WTC11 (cell line): ENCODE measurements at regions of chr2 and their contacts with region 1.

Region 1: DNA sequence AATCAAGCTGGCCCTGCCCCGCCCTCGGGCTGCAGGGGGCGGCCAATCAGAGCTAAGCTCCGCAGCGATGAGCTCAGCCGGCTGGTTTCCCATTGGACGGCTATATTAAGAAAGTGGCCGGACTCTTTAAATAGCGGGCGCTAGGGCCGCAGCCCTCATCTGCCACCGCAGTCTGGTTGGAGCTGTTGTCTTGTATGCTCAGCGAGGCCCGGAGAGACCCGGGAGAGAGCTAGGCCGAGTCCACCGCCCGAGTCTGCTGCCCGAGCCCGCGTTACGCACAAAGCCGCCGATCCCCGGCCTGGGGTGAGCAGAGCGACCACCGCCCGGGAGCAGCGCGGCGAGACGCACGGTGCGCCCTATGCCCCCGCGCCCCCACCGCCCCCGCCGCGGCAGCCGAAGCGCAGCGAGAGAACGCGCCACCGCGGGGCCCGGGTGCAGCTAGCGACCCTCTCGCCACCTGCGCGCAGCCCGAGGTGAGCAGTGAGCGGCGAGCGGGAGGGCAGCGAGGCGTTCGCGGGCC is at the start of gene RHOB:
- DNase-seq: peak; percentile 95
- ATAC-seq: peak; percentile 81
- H3K4me3 Mint-ChIP-seq: peak within 1 kb of the TSS; percentile 82
- H3K27ac Mint-ChIP-seq: no peak within 1 kb of the TSS
- H3K4me1 Mint-ChIP-seq: peaks cover 35% of the 10 kb centered on the region
- H3K27me3 Mint-ChIP-seq: peaks cover 60% of the 10 kb centered on the region
- CTCF ChIP-seq: no peak
- total RNA-seq, gene RHOB: 20.4 to 23.2 TPM (median 22.7 TPM) in 3 replicates

Region 2: DNA sequence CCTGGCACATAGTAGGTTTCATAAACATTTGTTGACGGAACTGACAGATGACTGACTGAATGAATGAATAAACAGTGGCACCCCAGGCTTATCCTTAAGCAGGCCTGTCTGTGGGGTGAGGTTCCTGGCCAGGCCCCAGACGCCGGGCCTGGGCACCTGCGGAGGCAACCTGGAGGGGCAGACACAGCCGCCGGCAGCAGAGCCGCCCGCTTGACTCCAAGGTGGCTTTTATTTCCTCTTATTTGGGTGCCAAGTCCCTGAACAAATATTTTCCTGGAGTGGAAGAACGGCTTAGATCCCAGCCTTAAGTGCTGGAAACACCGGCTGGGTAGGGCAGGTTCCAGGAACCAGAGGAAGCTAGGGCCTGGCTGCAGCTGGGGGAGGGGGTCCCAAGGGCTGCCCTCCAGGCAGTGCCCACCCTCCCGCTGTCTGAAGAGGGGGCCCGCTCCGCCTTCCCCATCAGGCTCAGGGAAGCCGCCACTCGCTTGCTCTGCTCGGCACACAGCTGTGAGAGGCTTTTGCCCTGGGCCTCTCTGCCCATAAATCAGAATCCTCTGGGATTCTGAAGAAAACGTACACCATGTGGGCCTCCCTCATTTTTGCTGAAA is 250.3 kb before region 1 on chr2:
- CTCF ChIA-PET with region 1: no interaction called
- POLR2A ChIA-PET with region 1: no interaction called
- DNase-seq: no peak
- ATAC-seq: no peak
- H3K4me3 Mint-ChIP-seq: no peak overlapping the region
- H3K27ac Mint-ChIP-seq: no peak overlapping the region
- H3K4me1 Mint-ChIP-seq: peaks cover 4% of the 10 kb centered on the region
- H3K27me3 Mint-ChIP-seq: no peaks in the 10 kb centered on the region
- CTCF ChIP-seq: no peak

Region 3: DNA sequence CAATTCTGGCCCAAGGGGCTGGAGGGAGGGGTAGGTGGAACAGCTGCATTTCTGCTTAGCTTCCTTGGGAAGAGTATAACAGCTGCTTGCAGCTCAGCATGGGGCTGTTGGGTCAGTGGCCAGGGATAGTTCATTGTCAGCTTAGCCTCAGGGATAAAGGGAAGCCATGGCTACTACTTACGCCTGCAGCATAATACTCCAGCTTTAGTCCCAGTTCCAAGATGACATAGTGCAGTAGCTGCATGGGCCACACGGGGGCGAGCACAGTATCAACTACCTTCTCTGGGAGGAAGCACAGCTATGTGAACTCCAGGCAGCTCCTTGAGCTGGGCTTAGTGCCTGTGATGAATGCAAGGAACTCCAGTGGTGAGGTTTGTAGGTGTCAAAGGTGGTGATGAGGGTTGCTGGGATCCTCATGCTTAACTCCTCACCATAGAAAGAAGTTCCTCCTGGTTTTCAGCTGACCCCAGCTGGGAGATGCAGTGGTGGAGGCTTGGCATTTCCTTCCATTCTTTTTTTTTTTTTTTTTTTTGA is 35.5 kb before region 1 on chr2:
- CTCF ChIA-PET with region 1: interaction called, 25 read pairs
- POLR2A ChIA-PET with region 1: interaction called, 10 read pairs
- DNase-seq: peak; percentile 89
- ATAC-seq: peak; percentile 100
- H3K4me3 Mint-ChIP-seq: no peak overlapping the region
- H3K27ac Mint-ChIP-seq: no peak overlapping the region
- H3K4me1 Mint-ChIP-seq: no peaks in the 10 kb centered on the region
- H3K27me3 Mint-ChIP-seq: peaks cover 6% of the 10 kb centered on the region
- CTCF ChIP-seq: peak; percentile 78

Region 4: DNA sequence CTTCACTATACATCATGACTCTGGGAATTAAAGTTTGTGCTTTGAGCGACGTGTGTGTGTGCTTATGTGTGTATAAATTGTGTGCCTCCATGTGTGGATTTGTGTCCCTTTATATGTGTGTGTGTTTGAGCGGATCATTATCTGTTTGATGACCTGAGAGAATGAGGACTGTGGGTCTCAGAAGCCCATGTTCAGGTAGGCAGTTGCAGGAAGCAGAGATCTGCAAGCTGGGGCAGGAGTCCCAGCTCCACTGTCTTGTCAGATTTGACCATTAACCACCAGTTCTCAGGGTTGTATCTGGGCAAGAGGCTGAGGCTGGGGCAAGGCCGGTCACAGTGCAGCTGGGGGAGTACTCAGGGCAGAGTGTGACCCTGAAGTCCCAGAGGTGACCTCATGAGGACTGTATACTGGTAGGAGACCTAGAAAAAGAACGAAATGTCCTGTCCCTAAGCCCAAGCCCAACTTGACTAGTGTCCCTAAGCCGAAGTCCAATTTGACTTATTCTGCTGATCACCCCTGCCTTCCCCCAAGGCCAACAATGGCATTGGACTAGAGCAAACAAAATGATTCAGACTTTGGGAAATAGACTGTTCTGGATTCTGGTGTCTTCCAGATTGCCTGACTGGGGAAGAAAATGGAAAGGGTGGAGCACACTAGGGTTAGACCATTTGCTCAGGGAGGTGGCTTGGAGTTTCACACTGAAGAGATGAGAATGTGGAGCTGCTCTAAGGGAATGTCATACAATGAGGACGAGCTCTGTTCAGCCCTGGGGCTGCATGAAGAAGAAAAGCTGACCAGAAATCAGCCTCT is 28.0 kb after region 1 on chr2:
- CTCF ChIA-PET with region 1: no interaction called
- POLR2A ChIA-PET with region 1: interaction called, 10 read pairs
- DNase-seq: no peak
- ATAC-seq: no peak
- H3K4me3 Mint-ChIP-seq: no peak overlapping the region
- H3K27ac Mint-ChIP-seq: no peak overlapping the region
- H3K4me1 Mint-ChIP-seq: peaks cover 5% of the 10 kb centered on the region; the same call in 1 of the 2 replicates
- H3K27me3 Mint-ChIP-seq: no peaks in the 10 kb centered on the region; the same call in 1 of the 2 replicates
- CTCF ChIP-seq: no peak

Region 5: DNA sequence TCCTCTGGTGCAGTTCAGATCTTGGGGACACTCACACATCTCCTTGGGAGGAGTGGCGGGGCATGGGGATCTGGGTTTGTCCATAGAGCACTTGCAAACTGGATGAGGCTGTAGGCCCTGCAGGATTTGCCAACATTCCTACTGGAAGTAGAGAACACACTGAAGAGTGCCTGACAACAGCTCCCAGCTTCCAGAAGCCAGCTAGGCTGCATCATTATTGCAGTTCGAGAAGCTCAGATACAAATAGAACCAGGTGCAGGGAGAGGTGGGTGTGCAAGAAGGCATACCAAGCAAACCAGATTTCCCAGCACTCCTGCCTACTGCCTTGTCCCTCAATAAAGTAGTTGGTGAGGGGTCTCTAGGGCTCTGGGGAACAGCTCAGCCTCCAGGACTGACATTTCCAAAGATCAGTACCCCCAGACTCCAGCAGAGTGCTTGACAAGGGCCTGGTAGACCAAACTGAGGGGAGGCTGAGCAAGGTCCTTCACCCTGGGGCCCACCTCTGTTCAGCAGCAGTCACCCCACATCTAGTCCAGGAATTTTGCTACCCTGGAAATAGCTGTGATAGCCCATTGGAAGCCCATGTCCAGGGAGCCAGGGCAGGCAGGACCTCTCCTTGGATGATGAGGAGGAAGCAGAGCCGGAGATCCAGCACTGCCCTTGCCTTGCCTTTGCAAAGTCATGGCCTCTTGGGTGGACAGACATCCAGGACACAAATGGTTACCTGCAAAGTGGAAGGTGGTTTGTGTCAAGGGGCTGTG is 52.6 kb after region 1 on chr2:
- CTCF ChIA-PET with region 1: no interaction called
- POLR2A ChIA-PET with region 1: no interaction called
- DNase-seq: no peak
- ATAC-seq: no peak
- H3K4me3 Mint-ChIP-seq: no peak overlapping the region
- H3K27ac Mint-ChIP-seq: no peak overlapping the region
- H3K4me1 Mint-ChIP-seq: no peaks in the 10 kb centered on the region
- H3K27me3 Mint-ChIP-seq: no peaks in the 10 kb centered on the region
- CTCF ChIP-seq: no peak

Region 6: DNA sequence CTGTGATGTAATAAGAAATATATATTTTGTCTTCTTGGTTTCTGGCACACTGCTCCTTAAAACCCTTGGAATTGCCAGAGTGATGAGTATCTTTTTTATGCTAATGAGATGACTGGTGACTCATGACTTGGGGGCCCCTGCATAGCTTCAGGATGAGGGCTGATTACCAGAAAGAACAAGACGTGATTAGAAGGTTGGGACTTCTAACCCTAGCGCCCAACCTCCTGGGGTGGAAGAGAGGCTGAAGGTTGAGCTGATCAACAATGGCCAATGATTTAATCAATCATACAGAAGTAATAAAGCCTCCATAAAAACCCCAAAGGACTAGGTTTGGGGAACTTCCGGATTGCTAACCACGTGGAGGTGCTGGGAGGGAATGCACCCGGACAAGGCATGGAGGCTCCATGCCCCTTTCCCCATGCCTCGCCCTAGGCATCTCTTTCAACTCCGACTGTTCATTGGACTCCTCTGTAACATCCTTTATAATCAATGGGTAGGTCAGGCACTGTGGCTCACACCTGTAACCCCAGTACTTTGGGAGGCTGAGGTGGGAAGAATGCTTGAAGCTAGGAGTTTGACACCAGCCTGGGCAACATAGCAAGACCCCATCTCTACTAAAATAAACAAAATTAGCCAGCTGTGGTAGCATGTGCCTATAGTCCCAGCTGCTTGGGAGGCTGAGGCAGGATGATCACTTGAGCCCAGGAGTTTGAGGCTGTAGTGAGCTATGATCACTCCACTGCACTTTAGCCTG is 114.9 kb after region 1 on chr2:
- CTCF ChIA-PET with region 1: interaction called, 8 read pairs
- POLR2A ChIA-PET with region 1: interaction called, 15 read pairs
- DNase-seq: no peak
- ATAC-seq: no peak
- H3K4me3 Mint-ChIP-seq: no peak overlapping the region; the same call in 1 of the 2 replicates
- H3K27ac Mint-ChIP-seq: no peak overlapping the region
- H3K4me1 Mint-ChIP-seq: peaks cover 42% of the 10 kb centered on the region
- H3K27me3 Mint-ChIP-seq: peaks cover under 1% of the 10 kb centered on the region; the same call in 1 of the 2 replicates
- CTCF ChIP-seq: no peak

Region 7: DNA sequence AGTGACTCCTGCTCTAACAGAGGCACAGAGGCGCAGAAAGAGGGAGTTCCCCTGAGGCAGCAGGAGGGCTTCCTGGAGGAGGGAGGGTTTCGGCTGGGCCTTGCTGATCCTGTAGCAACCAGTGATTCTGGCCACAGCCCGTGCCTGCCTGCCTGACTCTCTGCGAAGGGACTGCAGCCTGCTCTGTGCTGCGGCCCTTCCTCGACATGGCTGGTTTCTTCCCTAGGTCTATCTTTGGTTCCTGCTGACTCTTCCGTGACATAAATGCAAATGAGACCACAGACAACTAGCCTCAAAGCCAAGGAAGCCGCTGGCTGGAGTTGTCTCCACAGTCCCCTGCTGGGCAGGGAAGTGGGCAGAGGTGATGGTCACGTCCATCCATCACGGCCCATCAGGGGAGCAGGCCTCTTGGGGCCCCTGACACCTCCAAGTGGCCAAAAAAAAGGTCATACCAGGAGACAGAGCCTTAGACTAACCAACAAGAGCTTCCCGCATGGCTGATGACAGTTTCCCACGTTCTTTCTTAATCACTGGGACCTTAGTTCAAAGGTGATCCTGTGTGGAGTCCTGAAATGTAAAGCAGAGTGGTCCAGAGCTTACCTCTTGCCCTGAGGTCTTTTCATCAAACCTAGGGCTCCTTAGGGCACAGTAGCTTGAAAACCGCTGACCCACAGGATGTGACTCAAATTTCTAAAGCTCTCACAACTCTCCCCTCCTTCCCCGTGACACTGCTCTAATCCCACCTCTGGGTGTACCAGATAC is 148.6 kb after region 1 on chr2:
- CTCF ChIA-PET with region 1: interaction called, 3 read pairs
- POLR2A ChIA-PET with region 1: interaction called, 10 read pairs
- DNase-seq: peak; percentile 23
- ATAC-seq: peak; percentile 62
- H3K4me3 Mint-ChIP-seq: no peak overlapping the region
- H3K27ac Mint-ChIP-seq: peak overlapping the region; percentile 79; the same call in 1 of the 2 replicates
- H3K4me1 Mint-ChIP-seq: peaks cover 18% of the 10 kb centered on the region
- H3K27me3 Mint-ChIP-seq: no peaks in the 10 kb centered on the region
- CTCF ChIP-seq: no peak

Region 8: DNA sequence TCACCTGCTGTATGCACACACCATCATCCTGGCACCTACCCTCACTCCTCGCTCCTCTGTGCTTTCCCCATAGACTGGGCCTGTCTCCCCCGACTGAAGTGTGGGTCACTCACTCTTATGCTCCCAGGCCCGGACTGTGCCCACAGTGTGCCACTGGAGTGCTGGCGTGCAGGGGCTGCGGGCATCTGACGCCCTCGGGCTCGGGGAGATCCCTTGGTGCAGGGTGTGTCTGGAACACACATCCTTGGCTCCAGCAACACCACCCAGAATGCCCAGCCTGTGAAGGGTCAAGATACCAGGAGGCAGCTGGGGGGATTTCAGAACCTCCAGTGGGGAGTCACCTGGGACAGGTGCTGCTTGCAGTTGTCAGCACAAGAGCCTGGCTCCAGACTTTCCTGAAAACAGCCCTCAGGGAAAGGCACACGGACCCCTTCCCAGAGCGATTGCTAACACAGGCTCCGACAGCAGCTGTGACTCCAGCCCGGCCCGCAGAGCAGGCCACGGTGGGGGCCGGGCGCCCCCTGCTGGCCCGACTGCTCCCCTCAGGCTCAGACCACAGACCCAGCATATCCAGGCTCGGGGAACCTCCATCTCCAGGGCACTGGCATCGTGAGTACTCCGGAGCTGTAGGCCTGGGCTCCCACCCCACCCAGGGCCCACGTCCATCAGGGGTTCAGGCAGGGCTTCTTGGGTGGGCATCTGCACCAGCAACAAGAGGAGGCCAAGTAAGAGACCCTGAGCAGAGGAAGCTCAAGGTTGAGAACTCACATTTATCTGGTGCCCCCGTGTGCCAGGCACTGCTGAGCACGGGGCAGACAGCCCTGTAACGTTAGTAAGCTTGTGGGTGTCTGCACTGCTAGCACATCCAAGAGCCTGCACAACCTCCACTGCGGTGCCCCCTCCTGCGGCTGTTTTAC is 195.3 kb after region 1 on chr2:
- CTCF ChIA-PET with region 1: interaction called, 45 read pairs
- POLR2A ChIA-PET with region 1: interaction called, 20 read pairs
- DNase-seq: peak; percentile 80
- ATAC-seq: peak; percentile 97
- H3K4me3 Mint-ChIP-seq: no peak overlapping the region
- H3K27ac Mint-ChIP-seq: no peak overlapping the region
- H3K4me1 Mint-ChIP-seq: no peaks in the 10 kb centered on the region
- H3K27me3 Mint-ChIP-seq: no peaks in the 10 kb centered on the region
- CTCF ChIP-seq: peak; percentile 93

Region 9: DNA sequence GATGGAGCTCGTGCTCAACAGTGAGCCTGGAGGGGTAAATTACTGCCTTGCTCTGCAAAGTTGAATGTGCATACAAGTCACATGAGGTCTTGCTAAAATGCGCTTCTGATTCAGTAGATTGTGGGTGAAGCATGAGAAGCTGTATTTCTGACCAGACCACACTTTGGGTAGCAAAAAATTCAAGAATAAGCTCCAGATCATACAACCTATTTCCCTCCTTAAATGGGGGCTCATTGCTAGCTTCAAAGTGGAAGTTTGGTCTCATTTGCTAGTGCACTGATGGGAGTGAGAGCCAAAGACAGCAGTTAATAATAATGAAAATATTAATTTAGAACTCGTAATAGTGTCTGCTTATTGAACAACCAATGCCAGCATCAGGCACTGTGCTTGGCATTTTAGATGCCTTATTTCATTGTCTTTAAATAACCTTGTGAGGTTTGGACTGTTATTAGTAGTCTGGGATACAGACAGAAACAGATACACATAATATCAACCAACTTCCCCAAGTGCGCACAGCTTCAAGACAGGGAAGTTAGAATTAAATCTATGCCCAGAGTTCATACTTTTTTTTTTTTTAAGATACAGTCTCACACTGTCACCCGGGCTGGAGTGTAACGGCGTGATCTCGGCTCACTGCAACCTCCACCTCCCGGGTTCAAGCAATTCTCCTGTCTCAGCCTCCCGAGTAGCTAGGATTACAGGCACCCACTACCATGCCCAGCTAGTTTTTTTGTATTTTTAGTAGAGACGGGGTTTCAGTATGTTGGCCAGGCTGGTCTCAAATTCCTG is 578.9 kb after region 1 on chr2:
- CTCF ChIA-PET with region 1: no interaction called
- POLR2A ChIA-PET with region 1: no interaction called
- DNase-seq: no peak
- ATAC-seq: no peak
- H3K4me3 Mint-ChIP-seq: no peak overlapping the region
- H3K27ac Mint-ChIP-seq: 0 out of 2 replicates have a peak overlapping the region, but pooled peaks have one; percentile 21
- H3K4me1 Mint-ChIP-seq: no peaks in the 10 kb centered on the region
- H3K27me3 Mint-ChIP-seq: no peaks in the 10 kb centered on the region
- CTCF ChIP-seq: no peak